Right ventricle myocardium superior (tissue), 1 donor: ENCODE measurements at regions of chr15 and their contacts with region 1.

Region 1: GRCh38 chr15:98647774-98648653 is at the start of gene IGF1R:
- DNase-seq: peak; percentile 93
- ATAC-seq: peak; percentile 83
- total RNA-seq, gene IGF1R: 31.4 TPM

Region 2: DNA sequence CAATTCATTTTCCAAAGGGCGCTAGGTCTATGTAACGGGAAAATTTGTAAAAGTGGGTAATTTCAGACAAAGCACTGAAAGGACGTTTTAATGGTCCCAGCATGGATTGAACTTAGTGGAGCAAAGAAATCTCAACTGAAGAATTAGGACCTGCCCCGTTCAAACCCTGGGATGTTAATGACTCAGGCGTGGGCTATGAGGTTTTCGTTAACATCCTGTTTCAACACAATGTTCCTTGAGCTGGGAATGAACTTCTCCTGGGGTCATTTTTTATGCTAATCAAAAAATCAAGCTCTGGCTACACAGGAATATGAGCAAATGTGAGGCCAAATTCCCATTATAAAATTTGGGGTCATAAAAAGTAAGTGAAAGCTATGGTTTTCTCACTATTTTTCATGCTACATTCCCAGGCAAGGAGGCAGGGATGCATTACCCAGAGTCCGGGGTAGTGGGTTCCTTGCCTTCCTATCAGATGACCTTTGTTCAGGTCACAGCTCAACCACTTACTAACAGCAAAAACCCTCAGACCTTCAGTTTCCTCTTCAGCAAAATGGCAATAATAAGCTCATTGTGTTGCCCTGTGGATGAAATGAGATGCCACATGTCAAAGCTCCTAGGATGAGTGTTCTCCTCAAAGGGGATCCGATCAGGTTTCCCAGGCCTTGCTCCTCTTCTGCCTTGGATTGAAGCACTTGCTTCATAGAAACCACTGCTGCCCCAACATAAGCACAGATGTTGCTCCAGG is 416.1 kb before region 1 on chr15:
- intact Hi-C with region 1: no loop called
- DNase-seq: no peak
- ATAC-seq: no peak

Region 3: DNA sequence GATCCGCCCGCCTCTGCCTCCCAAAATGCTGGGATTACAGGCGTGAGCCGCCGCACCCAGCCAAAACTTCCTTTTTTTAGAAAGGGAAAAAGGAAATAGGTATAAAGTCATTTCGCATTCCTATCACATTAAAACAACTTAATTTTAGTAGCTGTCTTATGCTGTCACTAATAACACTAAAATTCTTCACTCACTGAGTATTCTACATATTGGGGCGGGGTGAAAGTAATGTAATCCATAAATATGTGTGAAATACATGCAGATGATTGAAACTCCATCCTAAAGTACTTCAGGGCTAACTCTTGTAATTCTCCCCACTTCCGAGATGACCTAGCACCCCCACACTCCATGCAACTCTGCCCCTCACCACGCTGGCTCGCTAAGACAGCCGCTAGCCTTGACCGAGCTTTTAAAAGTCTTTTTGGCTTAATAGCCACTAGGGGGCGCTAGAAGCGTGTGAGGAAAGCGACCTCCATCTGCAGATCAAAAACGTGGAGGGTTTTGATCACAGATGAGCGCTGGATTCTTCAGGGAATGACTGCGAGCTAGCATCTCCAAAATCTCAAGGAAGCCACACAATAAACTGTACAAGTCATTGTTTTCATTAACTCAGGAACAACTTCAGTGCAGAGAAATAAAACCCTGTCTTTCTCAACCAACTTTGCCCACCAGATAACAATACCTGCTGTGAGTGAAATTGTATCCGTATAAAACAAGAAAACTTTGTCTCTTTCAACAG is 129.0 kb before region 1 on chr15:
- intact Hi-C with region 1: loop called (anchors 5 kb)
- DNase-seq: no peak
- ATAC-seq: peak; percentile 88

Region 4: DNA sequence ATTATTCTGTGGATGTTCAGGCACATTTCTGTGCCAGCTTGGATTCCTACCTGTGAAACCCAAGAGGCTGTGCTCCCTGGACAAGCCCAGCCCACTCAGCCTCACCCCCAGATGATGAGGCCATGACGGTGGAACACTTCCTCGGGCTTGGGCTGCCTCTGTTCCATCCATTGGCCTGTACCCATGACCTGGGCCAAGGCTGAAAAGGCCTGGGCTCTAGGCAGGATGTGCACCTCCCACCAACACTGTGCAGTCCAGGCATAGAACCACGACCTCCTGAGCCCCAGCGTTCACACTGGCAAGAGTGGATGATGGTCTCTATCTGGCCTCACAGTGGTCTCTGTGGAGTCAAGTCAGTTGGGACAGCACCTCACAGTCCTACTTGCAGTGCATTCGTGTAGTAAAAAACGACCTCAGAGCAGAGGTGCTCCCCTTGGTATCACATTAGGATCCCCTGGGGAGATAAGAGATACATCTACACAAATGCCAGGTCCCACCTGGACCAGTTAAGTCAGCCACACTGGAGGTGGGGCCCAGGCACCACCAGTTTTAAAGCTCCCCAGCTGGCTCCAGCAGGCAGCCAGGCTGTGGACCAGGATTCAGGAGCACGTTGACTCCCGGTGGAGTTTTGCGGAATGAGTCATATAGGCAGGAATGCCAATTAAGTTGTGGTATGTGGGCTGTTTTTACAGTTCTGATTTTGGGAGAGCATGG is 38.7 kb before region 1 on chr15:
- intact Hi-C with region 1: no loop called
- DNase-seq: no peak
- ATAC-seq: no peak

Region 5: GRCh38 chr15:98779463-98780071 is 131.6 kb after region 1 on chr15:
- intact Hi-C with region 1: loop called (anchors 5 kb)
- DNase-seq: peak; percentile 87
- ATAC-seq: peak; percentile 91

Region 6: DNA sequence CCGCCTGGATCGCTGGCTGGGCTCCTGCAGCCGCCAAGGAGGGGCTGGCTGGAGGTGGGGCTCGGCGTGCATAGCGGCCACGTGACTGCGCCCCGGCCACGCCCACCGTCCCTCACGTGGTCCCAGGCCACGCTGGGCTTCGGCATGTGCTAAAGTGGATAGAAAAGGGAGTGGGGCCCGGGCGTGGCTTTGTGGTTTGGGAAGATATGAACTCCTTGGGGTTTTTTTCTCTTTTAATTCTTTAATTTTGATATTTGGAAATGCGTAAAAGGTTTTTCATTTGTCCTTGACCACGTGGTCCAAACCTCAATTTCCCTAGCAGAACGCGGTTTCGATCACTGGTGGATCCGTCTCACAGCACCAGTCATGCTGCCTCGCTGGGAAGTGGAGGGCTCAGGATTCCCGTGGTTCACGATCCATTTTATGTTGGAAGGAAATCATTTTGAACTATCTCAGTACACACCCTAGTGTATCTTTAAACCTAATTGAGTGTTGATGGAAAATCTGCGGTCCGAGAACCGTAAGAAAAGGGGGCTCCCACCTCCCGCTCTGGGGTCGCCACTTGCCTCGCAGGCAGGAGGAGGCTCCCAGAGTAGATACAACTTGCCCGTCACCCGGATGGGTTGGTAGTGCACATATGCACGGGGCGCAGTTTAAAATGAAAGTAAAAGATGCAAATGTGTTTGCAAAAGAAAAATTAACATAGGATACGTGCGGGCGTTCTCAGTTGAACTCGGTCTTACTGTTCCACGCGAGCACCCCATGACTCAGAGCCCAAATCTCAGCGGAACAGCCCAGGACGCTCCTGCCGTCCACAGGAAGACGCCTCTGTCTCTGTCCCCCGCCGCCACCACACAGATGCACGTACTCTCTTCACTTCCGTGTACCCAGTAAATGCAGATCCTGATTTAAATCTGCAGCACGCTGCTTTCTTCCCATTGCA is 217.7 kb after region 1 on chr15:
- intact Hi-C with region 1: loop called (anchors 5 kb)
- DNase-seq: peak; percentile 87
- ATAC-seq: peak; percentile 88

Region 7: DNA sequence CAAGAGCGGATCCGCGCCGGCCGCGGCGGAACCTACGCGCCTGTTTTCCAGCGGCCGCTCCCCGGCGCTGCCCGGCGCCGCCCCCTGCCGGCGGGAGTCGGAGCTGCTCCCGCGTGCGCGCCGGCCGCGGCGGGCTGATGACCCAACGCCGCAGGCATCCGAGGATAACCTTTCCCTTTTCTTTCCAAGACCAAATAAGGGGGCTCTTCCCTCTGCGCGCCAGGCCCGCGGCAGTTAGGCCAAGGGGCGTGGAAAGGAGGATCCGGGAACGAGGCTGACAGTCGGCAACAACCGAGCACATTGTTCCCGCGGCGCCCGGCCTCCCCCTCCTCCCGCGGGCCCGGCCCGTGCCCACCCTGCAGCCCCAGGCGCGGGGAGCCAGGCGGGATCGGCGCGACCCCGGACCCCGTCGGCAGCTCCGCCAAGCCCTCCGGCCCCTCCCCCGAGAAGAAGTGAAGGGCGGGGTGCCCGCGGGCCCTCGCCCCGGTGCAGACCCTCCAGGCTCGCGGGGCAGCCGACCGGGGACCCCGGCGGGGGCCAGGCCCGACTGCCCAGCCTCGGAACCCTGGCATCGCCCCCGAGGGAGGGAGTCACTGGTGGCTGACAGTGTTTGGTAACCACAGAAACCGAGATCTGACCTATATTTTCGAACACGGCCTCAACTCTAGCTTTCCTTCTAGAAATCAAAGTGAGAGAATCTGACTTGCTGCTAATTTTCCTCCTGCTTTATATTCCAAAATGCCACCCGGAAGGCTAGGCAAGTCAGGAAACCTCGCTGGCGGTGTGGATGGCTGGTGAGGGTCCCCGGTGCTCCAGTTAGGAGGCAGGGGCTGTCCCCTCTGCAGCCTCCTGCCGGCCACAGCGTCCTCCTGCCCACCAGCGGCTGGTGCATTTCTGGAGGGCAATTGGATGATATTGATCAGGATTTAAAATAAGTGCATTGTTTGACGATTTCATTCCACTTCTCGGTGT is 411.3 kb after region 1 on chr15:
- intact Hi-C with region 1: loop called (anchors 10 kb)
- DNase-seq: peak; percentile 84
- ATAC-seq: peak; percentile 90